BJ (cell line): ENCODE measurements at regions of chr5 and their contacts with region 1.

Region 1: GRCh38 chr5:172770675-172771438 is at the start of gene DUSP1:
- DNase-seq: peak; percentile 82
- H3K4me3 ChIP-seq: peak within 1 kb of the TSS; percentile 82
- H3K27me3 ChIP-seq: no peaks in the 10 kb centered on the region
- CTCF ChIP-seq: peak; percentile 31; the same call in 1 of the 2 replicates
- polyA plus RNA-seq, gene DUSP1: 252 and 432 TPM in 2 replicates

Region 2: DNA sequence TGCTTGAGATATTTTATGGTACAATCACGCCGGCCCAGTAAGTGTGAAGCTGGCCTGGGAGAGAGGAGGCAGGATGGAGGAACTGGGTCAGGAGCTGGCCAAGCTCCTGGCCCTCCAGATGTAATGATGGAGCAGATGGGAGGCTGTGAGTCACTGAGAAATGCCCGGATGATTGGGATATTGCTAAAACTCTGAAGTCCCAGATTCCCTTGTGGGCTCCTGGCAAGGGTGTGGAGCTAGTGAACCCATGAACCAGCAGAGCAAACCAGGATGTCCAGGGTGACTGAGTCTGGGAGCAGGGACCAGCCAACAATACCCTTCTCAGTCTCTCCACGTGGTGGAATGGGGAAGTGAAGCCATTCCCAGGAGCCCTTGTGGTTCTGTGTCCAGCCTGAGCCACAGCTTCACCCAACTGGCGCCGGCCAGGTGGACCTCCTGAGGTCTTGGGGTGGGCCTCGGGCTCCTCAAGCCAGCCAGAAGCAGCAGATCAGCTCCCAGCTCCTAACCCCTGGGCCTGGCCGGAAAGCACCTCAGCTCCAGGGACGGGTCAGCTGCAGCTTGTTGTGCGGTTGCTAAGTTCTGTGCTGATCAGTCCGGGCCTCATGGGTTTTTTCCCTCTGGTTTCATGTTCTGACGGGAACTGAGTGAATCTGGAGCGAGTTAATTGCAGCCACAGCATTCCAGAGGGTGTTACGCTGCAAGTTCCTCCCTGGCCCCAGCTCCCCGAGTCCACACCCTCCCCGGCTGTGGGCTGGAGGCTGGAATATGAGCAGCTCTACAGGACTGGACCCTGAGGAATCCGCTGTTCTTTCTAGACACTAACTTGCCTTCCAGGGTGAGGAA is 37.5 kb before region 1 on chr5:
- CTCF ChIA-PET with region 1: interaction called, 14 read pairs
- POLR2A ChIA-PET with region 1: interaction called, 10 read pairs
- DNase-seq: peak; percentile 99
- H3K4me3 ChIP-seq: no peak overlapping the region
- H3K27me3 ChIP-seq: no peaks in the 10 kb centered on the region
- CTCF ChIP-seq: no peak

Region 3: DNA sequence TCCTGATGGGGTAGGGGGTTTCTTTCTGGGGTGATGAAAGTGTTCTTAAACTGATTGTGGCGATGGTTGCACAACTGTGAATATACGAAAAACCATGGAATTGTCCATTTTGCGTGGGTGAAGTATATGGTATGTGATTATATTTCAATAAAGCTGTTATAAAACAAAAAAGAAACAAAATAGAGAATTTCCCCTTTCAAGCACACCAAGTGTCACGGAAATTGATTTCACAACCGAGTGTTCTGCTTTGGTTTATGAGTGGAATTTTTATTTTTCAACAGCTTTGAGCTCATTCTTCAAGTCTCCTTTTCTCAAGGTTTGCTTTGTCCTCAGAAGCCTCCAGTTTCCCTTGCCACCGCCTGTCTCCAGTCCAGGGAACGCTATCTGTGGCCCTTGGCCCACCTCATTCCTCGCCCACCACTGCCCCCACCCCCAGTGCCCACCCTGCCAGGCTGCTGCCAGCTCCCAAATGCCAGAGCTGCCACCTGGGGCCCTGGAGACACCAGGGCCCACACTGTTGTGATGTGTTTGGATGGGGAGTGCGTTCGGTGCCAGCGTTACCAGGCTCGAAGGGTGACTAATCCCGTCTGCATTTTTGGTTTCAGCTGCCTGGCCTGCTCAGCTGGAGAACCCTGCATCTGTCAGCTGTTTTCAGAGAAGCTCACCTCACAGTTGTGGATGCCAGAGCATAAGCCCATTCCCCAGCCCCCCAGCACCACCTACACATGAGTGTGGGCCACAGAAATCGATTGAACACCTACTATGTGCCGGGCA is 30.2 kb before region 1 on chr5:
- CTCF ChIA-PET with region 1: no interaction called
- POLR2A ChIA-PET with region 1: interaction called, 11 read pairs
- DNase-seq: peak; percentile 75
- H3K4me3 ChIP-seq: no peak overlapping the region
- H3K27me3 ChIP-seq: no peaks in the 10 kb centered on the region
- CTCF ChIP-seq: no peak

Region 4: DNA sequence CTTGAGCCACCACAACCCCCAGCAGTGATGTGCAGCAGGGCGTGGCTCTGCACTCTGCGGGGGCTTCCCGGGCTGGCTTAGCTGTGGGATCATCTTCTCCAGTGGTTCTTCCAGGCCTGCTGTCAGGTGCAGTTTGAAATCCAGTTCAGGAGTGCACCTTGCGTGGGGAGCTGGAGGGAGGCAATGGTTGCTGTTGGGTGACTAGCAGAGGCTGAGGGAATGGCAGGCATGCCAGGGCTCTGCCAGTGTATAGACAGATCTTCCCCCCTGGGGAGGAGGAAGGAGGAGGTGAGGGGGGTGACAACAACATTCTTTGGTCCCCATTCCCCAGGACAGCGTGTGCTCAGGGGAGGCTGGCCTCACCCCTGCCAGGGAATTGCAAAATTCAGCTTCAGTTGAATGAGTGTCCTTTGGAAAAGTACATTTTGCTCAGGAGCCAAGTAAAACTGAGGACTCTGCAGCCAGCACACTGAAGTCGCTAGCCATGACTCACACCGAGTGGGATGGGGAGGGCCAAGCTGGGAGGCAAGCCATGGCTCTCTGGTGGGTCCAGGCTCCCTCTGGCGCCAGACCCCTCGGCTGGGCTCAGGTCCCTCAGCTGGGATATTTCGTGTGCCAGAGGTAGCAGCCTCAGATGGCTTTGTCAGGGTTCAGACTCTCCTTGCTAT is 98.2 kb after region 1 on chr5:
- CTCF ChIA-PET with region 1: interaction called, 23 read pairs
- POLR2A ChIA-PET with region 1: interaction called, 5 read pairs
- DNase-seq: peak; percentile 81
- H3K4me3 ChIP-seq: no peak overlapping the region
- H3K27me3 ChIP-seq: no peaks in the 10 kb centered on the region
- CTCF ChIP-seq: peak; percentile 51

Region 5: GRCh38 chr5:172958331-172959046 is 187.6 kb after region 1 on chr5:
- CTCF ChIA-PET with region 1: no interaction called
- POLR2A ChIA-PET with region 1: interaction called, 11 read pairs
- DNase-seq: no peak
- H3K4me3 ChIP-seq: peak overlapping the region; percentile 94
- H3K27me3 ChIP-seq: no peaks in the 10 kb centered on the region
- CTCF ChIP-seq: no peak